ENCODE measurements at regions of chr20 and their contacts with region 1.

Region 1: DNA sequence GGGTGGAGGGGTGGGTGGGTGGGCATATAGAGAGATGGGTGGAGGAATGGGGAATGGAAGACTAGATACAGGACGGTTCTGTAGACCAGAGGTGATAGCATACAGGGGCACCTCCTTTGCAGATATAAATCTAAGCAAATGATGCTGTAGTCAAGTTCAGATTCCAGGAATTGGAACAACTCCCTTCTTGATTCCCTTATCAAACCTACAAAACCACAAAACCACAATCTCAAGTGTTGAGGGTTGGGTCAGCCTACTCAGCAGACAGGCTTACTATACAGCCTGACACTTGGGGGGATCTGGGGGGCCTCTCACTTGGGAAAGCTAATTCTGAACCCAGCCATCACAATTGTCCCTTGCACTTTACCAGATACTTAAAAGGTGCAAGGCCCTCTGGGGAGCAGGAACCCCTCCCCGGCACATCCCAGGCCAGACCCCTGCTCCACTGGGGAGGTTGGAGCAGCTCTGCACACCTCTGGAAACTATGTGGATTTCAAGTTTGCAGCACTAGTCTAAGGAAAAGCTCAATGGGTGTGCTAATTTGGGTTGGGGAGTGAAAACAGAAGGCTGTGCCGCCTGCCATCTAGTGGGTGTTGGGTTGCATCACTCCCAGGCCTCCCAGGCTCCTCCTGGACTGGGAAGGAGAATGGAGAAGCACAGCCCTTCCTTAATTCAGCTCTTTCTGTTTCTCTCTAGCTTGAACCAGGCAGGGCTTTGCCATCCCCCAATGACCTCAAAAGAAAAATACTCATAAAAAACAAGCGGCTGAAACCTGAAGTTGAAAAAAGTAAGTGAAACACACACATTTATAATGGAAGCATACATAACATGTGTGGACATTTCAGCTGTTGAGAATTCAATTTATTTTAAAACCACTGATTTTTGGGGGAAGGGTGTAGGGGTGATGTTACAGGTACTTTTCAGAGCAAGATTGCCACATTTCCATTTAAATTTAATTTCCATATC is 121.2 kb upstream of the LAMP5 start:
- DNase-seq: peak; percentile 79 to 81
- H3K4me3 ChIP-seq: no peak overlapping the region
- H3K27ac ChIP-seq: no peak overlapping the region
- H3K4me1 ChIP-seq: peaks cover 0 to 49% (median 5%) of the 10 kb centered on the region in 4 donors
- H3K27me3 ChIP-seq: no peaks in the 10 kb centered on the region
- CTCF ChIP-seq: peak; percentile 78 to 89

Region 2: DNA sequence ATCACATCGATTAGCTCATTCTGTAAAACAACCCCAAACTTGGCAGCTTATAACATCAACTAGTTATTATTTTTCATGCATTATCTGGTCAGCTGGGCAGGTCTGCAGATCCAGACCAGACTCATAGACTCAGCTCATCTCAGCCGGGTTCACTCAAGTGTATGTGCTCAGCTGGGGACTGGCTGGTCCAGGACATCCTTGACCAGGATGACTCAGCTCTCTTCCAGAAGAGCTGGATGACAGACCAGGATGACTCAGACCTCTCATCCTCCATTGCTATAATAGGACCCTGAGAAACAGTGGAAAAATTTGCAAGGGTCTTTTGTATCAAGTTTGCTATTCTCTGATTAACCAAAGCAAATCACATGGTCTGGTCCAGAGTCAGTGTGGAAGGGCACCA is 636.8 kb before region 1 on chr20:
- intact Hi-C with region 1: loop called (anchors 5 kb)
- DNase-seq: no peak
- H3K4me3 ChIP-seq: no peak overlapping the region
- H3K27ac ChIP-seq: no peak overlapping the region
- H3K4me1 ChIP-seq: no peaks in the 10 kb centered on the region
- H3K27me3 ChIP-seq: no peaks in the 10 kb centered on the region
- CTCF ChIP-seq: no peak

Region 3: DNA sequence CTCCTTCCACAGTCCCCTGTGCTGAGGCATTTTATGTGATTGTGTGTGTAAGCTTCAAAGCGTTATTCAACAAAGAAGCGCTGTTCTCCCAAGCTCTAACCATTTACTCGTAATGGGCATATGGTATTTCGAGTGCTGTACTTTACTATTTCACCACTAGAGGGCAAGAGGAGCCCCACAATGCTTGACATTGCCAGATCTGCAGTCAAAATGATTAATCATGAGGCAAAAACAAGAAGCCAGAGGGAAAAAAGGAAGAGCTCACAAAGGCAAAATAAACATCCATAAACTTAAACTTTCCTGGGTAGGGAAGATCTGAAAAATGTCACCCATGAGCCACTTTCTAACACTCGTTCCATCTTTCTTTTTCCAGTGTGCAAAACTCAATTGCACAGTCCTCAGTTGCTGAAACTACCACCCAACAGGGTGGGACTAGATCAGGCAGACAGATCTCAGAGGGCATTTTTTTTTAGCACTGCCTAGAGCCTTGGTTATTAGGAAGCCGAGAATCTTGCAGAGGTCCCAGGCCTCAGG is 539.3 kb before region 1 on chr20:
- intact Hi-C with region 1: loop called (anchors 2 kb)
- DNase-seq: no peak
- H3K4me3 ChIP-seq: peak overlapping the region in 1 of 2 donors; percentile 24
- H3K27ac ChIP-seq: peak overlapping the region; percentile 52 to 66
- H3K4me1 ChIP-seq: peaks cover 0 to 43% (median 14%) of the 10 kb centered on the region in 4 donors
- H3K27me3 ChIP-seq: no peaks in the 10 kb centered on the region
- CTCF ChIP-seq: peak; percentile 87 to 94

Region 4: GRCh38 chr20:9427430-9428291 is 34.5 kb after region 1 on chr20:
- intact Hi-C with region 1: no loop called
- DNase-seq: no peak
- H3K4me3 ChIP-seq: no peak overlapping the region
- H3K27ac ChIP-seq: no peak overlapping the region
- H3K4me1 ChIP-seq: peaks cover 0 to 3% (median 0%) of the 10 kb centered on the region in 4 donors
- H3K27me3 ChIP-seq: no peaks in the 10 kb centered on the region
- CTCF ChIP-seq: no peak